ENCODE measurements at regions of chr16 and their contacts with region 1.

Region 1: GRCh38 chr16:25931473-25932035 is 239.8 kb downstream of the HS3ST4 start:
- DNase-seq: no peak
- H3K4me3 ChIP-seq: no peak overlapping the region
- H3K27ac ChIP-seq: no peak overlapping the region
- H3K4me1 ChIP-seq: no peaks in the 10 kb centered on the region
- H3K27me3 ChIP-seq: no peaks in the 10 kb centered on the region
- CTCF ChIP-seq: no peak

Region 2: DNA sequence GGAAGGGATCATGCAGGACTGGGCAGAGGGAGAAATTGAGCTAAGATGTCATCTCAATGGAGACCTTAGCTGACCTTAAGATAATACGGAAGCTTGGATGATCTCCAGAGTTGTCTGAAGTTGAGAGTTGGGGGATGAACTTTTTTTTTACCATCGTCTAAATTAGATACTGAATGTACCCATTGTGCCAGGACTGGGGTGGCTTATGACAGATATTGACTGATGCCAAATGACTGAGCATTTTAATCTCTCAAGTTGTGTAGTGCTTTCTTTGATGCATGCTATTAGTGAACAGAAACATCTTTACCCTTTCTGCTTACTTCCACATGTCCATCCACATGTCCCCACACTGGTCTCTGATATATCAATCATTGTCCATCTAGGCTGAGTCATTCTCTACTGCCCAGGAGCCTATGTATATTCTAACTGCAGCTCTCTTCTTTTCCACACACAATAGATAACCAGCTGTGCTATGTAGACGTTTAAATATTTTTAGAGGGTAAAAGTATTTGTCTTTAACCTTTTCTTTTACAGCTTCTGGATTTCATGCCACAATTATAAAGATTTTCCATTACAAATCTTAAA is 613.7 kb before region 1 on chr16:
- intact Hi-C with region 1: loop called (anchors 10 kb)
- DNase-seq: no peak
- H3K4me3 ChIP-seq: no peak overlapping the region
- H3K27ac ChIP-seq: no peak overlapping the region
- H3K4me1 ChIP-seq: no peaks in the 10 kb centered on the region
- H3K27me3 ChIP-seq: no peaks in the 10 kb centered on the region
- CTCF ChIP-seq: no peak

Measured in tibial artery (tissue), 4 donors.